ENCODE measurements at regions of chr2 and their contacts with region 1.

Region 1: DNA sequence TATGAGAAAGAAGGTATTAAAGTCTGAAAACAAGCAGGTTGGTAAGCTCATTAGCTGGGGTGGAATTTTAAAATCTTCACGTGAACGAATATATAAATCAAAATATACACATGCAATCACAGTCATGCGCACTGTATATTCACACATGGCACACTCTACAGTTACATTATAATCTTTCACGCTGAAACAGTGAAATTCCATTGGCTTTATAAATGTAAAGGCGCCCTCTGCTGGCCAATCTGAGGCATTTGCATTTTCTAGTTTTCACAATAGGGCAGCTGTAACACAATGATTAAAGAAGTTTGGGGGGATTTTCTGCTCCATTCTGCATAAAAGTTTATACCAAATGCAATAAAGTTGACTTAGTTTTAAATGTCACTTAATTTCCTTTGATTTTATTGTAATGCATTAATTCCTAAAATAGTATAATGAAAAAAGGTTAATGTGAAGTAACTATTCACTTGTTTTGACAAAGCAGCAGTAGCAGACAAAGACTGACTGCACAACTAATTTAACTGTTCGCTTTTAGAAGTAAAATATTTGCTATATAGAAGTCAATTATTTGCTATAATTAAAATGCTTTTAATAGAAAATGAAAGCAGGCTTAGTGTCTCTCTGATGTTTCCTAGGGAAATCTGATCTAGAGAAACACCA is 17.2 kb downstream of the IFIH1 start:
- DNase-seq: peak; percentile 72
- ATAC-seq: peak; percentile 68
- H3K4me3 ChIP-seq: no peak overlapping the region
- H3K4me3 Mint-ChIP-seq: no peak overlapping the region
- H3K27ac ChIP-seq: no peak overlapping the region
- H3K27ac Mint-ChIP-seq: no peak overlapping the region
- H3K4me1 ChIP-seq: no peaks in the 10 kb centered on the region
- H3K4me1 Mint-ChIP-seq: peaks cover 2% of the 10 kb centered on the region
- H3K27me3 ChIP-seq: no peaks in the 10 kb centered on the region
- H3K27me3 Mint-ChIP-seq: no peaks in the 10 kb centered on the region
- CTCF ChIP-seq: peak; percentile 97

Region 2: DNA sequence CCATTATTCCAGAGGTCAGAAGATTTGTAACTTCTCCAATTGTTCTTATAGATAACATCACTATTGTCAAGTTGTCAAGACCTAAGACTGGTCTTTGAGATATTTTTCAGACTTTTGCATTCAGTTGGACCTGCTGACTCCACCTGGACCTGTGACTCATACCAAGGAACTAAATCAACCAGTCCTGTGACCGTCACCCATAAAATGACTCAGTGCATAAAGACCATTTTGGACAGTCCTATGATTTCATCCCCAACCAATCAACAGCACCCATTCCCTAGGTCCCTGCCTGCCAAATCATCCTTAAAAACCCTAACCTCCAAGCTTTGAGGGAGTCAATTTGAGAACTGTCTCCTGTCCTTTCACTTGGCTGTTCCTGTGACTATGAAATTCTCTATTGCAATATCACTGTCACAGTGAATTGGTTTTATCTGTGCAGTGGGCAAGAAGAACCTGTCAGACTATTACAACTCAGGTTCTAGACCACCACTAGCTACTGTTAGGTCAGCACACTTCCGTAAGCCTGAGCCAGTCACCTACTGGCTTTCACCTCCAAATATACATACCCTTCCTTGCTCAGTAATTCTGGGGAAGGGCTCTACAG is 244.4 kb before region 1 on chr2:
- CTCF ChIA-PET with region 1: no interaction called
- POLR2A ChIA-PET with region 1: no interaction called
- intact Hi-C with region 1: no loop called
- DNase-seq: no peak
- ATAC-seq: no peak
- H3K4me3 ChIP-seq: no peak overlapping the region
- H3K4me3 Mint-ChIP-seq: no peak overlapping the region
- H3K27ac ChIP-seq: no peak overlapping the region
- H3K27ac Mint-ChIP-seq: no peak overlapping the region
- H3K4me1 ChIP-seq: no peaks in the 10 kb centered on the region
- H3K4me1 Mint-ChIP-seq: peaks cover 10% of the 10 kb centered on the region
- H3K27me3 ChIP-seq: no peaks in the 10 kb centered on the region
- H3K27me3 Mint-ChIP-seq: no peaks in the 10 kb centered on the region
- CTCF ChIP-seq: no peak

Region 3: DNA sequence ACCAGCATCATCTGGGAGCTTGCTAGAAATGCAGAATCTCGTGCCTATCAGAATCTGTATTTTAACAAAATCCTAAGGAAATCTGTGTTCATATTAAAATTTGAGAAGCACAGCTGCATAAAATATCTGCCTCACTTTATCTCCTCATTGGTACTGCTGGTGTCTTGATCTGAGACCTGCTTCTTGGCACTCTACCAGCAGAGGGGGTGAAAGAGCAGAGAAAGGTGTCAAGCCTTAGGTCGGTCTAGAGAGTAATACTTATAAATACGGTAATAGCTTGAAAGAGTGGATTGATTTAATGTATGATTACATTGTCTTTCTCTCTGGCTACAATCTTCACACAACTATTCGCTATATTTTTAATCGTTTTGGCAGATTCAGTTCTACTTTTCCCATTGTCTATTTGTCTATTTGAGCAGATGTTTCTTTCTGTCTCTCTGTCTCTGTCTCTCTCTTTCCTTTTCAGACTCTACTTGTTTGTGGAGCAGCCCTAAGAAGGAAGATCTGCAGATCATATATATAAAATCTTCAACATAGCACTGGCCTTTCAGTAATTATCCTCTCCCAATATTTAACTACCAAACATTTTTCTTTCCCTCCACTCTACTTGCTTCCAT is 147.6 kb before region 1 on chr2:
- CTCF ChIA-PET with region 1: interaction called, 13 read pairs
- POLR2A ChIA-PET with region 1: no interaction called
- intact Hi-C with region 1: loop called (anchors 2 kb)
- DNase-seq: peak; percentile 56
- ATAC-seq: peak; percentile 60
- H3K4me3 ChIP-seq: no peak overlapping the region
- H3K4me3 Mint-ChIP-seq: no peak overlapping the region
- H3K27ac ChIP-seq: no peak overlapping the region
- H3K27ac Mint-ChIP-seq: no peak overlapping the region
- H3K4me1 ChIP-seq: no peaks in the 10 kb centered on the region
- H3K4me1 Mint-ChIP-seq: peaks cover 2% of the 10 kb centered on the region
- H3K27me3 ChIP-seq: peaks cover 0 to 7% (median 3%) of the 10 kb centered on the region in 4 experiments
- H3K27me3 Mint-ChIP-seq: peaks cover 29% of the 10 kb centered on the region
- CTCF ChIP-seq: peak; percentile 82

Region 4: GRCh38 chr2:162318328-162319180 is 17.3 kb after region 1 on chr2 and contains the start of gene IFIH1:
- CTCF ChIA-PET with region 1: interaction called, 91 read pairs
- POLR2A ChIA-PET with region 1: interaction called, 6 read pairs
- intact Hi-C with region 1: loop called (anchors 1 kb)
- DNase-seq: peak; percentile 97
- ATAC-seq: peak; percentile 91
- H3K4me3 ChIP-seq: peak within 1 kb of the TSS; percentile 77 to 97 (median 86)
- H3K4me3 Mint-ChIP-seq: peak within 1 kb of the TSS; percentile 96
- H3K27ac ChIP-seq: peak within 1 kb of the TSS; percentile 99 to 100
- H3K27ac Mint-ChIP-seq: peak within 1 kb of the TSS; percentile 99
- H3K4me1 ChIP-seq: peaks cover 34 to 48% of the 10 kb centered on the region in 2 donors
- H3K4me1 Mint-ChIP-seq: peaks cover 64% of the 10 kb centered on the region
- H3K27me3 ChIP-seq: no peaks in the 10 kb centered on the region
- H3K27me3 Mint-ChIP-seq: no peaks in the 10 kb centered on the region
- CTCF ChIP-seq: peak; percentile 25
- total RNA-seq, gene IFIH1: 54.8 and 59.7 TPM in 2 replicates

Region 5: GRCh38 chr2:162370931-162371330 is 69.7 kb after region 1 on chr2:
- CTCF ChIA-PET with region 1: no interaction called
- POLR2A ChIA-PET with region 1: no interaction called
- intact Hi-C with region 1: no loop called
- DNase-seq: no peak
- ATAC-seq: no peak
- H3K4me3 ChIP-seq: no peak overlapping the region
- H3K4me3 Mint-ChIP-seq: no peak overlapping the region
- H3K27ac ChIP-seq: no peak overlapping the region
- H3K27ac Mint-ChIP-seq: no peak overlapping the region
- H3K4me1 ChIP-seq: no peaks in the 10 kb centered on the region
- H3K4me1 Mint-ChIP-seq: no peaks in the 10 kb centered on the region
- H3K27me3 ChIP-seq: no peaks in the 10 kb centered on the region
- H3K27me3 Mint-ChIP-seq: no peaks in the 10 kb centered on the region
- CTCF ChIP-seq: no peak